ENCODE measurements at regions of chr19 and their contacts with region 1.

Region 1: DNA sequence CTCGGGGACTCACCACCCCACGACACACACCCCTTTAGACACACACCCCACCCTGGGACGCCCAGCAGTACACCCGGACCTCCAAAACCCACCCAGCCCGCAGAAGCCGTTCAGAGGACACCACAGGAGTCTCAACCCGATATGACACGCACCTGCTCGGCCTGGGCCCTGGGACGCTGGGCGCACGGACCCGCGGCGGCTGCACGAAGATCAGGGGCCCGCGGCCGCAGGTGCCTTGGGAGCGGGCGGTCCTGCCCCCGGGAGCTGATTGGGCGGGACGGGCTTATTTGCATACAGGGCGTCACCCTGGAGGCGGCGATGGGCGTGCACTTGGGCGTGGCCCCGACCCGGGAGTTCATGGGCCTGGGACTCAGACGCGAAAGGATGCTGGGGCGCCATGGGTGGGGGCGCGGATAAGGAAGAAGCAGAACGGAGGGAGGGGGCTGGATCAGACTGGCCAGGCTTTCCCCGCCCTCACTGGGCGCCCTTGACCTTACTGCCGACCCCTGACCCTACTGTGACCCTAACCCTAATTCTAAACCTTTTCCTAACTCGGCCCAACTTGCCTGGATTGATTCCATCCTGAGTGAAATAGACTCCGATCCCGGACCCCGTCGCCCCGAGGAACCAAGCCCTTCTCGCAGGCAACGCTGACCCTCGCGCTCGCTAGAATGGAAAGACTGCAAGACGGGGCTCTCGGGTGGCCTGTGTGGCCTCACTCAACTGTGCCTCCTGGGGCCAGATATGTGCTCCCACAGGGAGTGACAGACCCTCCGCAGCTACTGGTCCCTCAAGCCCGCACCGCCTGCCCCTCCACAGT is at the start of gene MEF2B:
- DNase-seq: no peak
- ATAC-seq: peak; percentile 58
- H3K4me3 ChIP-seq: no peak within 1 kb of the TSS
- H3K27ac ChIP-seq: no peak within 1 kb of the TSS
- H3K4me1 ChIP-seq: peaks cover 9 to 10% of the 10 kb centered on the region in 2 experiments; a peak in 3 of 4 replicates
- H3K27me3 ChIP-seq: no peaks in the 10 kb centered on the region
- CTCF ChIP-seq: no peak
- POLR2A ChIP-seq: no peak
- RAD21 ChIP-seq: no peak
- total RNA-seq, gene MEF2B: 7.9 TPM

Region 2: DNA sequence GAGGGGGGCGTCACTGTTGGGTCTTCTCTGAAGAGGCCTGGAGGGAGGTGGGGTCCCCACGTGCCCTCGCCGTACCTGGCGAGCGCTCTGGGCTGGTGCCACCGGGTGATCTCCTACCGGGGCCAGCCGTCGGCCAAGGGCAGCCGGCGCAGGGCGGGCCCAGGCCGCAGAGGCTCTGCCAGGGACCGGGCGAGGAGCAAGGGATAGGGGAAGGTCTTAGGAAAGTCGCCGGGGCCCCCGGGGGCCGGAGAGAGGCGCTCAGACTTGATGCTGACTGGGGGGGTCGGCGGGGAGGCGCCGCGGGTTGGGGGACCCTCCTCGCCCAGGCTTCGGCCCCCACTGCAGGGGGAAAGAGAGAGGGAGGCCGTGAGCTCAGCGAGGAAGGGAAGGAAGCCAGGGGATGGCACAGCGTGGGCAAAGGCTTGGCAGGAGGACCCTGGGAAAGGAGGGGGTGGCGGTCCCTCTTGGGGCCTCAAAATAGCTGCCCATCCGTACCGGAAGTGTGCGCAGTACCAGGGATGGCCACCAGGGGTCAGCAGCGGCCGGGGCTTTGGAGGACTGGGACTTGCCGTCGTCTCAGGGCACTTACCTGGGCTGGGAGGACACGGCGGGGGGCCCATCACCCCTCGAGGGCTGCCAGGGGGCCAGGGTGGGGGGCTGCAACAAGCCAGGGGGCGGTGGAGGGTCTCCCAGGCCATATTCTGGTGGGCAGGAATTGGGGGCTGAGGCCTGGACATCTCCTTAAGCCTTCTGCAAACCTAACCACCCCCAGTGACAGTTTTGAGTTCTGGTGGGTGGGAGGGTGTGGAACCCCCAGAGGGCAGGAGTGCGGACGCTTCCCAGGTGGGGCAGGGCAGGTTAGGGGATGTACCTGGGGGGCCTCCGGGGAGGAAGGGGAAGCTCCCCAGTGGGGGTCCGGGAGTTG is 24.3 kb before region 1 on chr19:
- CTCF ChIA-PET with region 1: interaction called, 3 read pairs
- POLR2A ChIA-PET with region 1: no interaction called
- RAD21 ChIA-PET with region 1: interaction called, 3 to 4 read pairs
- intact Hi-C with region 1: loop called (anchors 2 kb)
- DNase-seq: no peak
- ATAC-seq: peak; percentile 92
- H3K4me3 ChIP-seq: no peak overlapping the region
- H3K27ac ChIP-seq: no peak overlapping the region
- H3K4me1 ChIP-seq: no peaks in the 10 kb centered on the region
- H3K27me3 ChIP-seq: no peaks in the 10 kb centered on the region
- CTCF ChIP-seq: peak; percentile 79 to 96 (median 86)
- POLR2A ChIP-seq: no peak
- RAD21 ChIP-seq: peak; percentile 91